ENCODE measurements at regions of chr3 and their contacts with region 1.

Region 1: DNA sequence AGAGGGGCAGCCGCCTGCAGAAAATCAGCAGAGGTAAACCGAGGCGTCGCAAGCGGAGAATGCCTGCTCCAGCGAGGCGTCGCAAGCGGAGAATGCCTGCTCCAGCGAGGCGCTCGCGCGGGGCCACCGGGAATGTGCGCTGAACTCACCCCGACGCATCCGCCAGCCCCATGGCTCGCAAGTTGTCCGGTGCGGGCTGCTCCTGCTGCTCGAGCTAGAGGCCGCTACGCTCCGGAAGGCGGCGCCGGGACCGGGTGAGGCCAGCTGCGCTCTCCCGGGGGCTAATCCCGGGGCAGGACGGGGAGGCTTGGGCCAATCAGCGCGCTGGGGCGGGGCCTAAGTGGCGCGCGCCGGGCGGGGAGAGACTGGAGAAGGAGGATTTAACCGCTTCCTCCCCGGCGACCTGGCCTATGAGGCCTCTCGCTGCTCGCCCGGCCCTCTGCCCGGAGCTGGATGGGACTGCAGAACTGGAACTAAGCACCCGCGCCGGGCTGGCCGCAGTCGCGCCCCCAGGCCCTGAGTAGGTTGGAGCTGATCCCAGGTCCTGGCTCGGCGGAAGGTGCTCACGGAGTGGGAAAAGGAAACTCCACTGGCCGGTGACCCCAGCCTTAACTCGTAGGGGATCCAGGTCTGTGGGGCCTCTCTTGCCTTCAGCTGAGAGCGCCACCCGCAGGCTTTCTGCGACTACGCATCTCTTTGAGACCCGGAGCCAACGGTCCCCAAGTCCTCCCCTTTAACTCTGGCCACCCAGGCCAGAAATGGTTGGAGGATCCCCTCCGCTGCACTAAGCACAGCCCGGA is at the start of gene SLC26A6:
- DNase-seq: peak; percentile 90
- ATAC-seq: peak; percentile 97
- H3K4me3 Mint-ChIP-seq: peak within 1 kb of the TSS; percentile 89
- H3K27ac Mint-ChIP-seq: peak within 1 kb of the TSS; percentile 50
- H3K4me1 Mint-ChIP-seq: peaks cover 15% of the 10 kb centered on the region
- H3K27me3 Mint-ChIP-seq: no peaks in the 10 kb centered on the region
- CTCF ChIP-seq: no peak
- total RNA-seq, gene SLC26A6: 12.4 and 21.5 TPM in 2 replicates

Region 2: DNA sequence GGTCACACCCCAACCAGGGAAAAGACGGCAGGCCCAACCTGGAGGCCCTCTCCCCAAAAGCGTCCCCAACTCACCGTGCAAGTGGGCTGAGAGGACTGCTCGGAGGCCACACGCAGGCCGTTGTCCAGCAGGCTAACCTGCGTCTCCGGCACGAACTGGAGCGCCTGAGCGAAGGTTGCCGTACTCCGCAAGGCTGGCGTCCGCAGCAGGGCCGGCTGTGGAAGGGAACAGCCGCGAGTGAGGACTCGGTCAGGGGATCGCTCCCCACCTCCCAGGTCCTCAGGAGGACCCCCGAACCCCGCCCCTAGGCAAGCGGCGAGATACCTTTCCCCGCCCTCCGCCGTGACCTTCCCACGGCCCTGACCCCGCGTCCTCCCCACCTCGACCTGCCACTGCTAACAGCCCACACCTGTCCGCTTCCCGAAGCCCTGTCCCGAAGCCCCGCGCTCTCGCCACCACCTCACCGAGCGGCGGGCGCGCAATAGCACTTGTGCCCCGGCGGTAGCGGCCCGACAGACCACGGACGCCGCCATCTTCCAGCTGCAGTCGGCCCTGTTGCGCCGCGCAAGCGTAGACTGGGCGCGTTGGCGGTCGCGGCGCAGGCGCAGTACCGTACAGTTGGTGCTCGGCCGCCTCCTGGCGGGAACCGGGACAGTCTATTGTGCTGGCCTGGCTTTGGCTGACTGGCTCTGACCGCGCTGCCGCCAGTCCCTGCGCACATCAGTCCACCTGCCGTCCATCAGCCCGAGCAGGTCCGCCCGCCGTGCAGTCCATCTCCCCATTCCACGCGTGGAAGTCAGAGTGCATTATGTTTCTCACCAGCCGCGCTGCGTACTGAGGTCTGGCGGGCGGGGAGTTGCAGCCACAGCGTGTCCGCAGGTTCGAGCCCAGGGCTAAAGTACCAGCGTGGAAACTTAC is 26.1 kb before region 1 on chr3 and contains the start of gene UQCRC1:
- CTCF ChIA-PET with region 1: no interaction called
- POLR2A ChIA-PET with region 1: interaction called, 12 read pairs
- intact Hi-C with region 1: loop called (anchors 1 kb)
- DNase-seq: peak; percentile 89
- ATAC-seq: peak; percentile 99
- H3K4me3 Mint-ChIP-seq: peak within 1 kb of the TSS; percentile 98
- H3K27ac Mint-ChIP-seq: peak within 1 kb of the TSS; percentile 93
- H3K4me1 Mint-ChIP-seq: peaks cover 18% of the 10 kb centered on the region
- H3K27me3 Mint-ChIP-seq: no peaks in the 10 kb centered on the region
- CTCF ChIP-seq: no peak
- total RNA-seq, gene UQCRC1: 117 and 118 TPM in 2 replicates

Region 3: DNA sequence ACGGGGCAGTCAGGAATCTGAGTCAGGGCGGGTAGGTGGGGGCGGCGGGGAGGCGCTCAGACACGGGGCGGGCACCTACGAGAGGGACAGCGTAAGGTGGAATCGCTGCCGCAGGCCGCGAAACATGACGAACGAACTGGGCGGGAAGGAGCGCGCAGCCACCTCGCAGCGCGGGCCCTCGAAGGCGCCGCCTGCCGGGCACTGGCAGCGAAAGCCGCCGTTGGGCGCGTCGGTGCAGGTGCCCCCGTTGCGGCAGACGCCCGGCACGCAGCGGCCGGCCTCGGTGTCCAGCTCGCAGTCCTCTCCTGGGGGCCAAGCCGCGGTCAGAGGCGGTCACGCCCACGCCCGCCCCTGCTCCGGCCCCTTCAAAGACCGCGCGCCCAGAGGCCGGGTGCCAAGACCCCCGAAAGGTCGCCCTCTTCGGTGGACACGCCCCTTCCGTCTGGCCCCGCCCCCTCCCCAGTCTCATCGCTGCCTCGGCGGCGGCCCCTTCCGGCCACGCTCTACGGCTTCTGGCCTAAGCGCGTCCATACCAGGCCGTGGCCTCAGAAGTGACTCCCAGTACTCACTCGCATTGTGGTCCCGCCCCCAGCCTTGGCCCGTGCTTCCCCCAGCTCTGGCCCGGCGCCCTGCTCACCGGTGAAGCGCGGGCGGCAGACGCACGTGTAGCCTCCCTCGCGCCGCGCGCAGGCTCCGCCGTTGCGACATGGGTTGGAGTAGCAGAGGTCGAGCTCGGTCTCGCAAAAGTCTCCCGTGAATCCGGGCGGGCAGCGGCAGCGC is 20.8 kb after region 1 on chr3:
- CTCF ChIA-PET with region 1: interaction called, 3 read pairs
- POLR2A ChIA-PET with region 1: interaction called, 4 read pairs
- intact Hi-C with region 1: loop called (anchors 1 kb)
- DNase-seq: peak; percentile 83
- ATAC-seq: peak; percentile 85
- H3K4me3 Mint-ChIP-seq: peak overlapping the region; percentile 78
- H3K27ac Mint-ChIP-seq: no peak overlapping the region
- H3K4me1 Mint-ChIP-seq: peaks cover 14% of the 10 kb centered on the region
- H3K27me3 Mint-ChIP-seq: peaks cover 11% of the 10 kb centered on the region
- CTCF ChIP-seq: no peak

Region 4: GRCh38 chr3:49434731-49435130 is 799.3 kb after region 1 on chr3:
- CTCF ChIA-PET with region 1: no interaction called
- POLR2A ChIA-PET with region 1: no interaction called
- intact Hi-C with region 1: no loop called
- DNase-seq: no peak
- ATAC-seq: no peak
- H3K4me3 Mint-ChIP-seq: no peak overlapping the region
- H3K27ac Mint-ChIP-seq: no peak overlapping the region
- H3K4me1 Mint-ChIP-seq: peaks cover 4% of the 10 kb centered on the region
- H3K27me3 Mint-ChIP-seq: no peaks in the 10 kb centered on the region
- CTCF ChIP-seq: no peak